Head of caudate nucleus (tissue), 42 donors: ENCODE measurements at regions of chr3 and their contacts with region 1.

Region 1: DNA sequence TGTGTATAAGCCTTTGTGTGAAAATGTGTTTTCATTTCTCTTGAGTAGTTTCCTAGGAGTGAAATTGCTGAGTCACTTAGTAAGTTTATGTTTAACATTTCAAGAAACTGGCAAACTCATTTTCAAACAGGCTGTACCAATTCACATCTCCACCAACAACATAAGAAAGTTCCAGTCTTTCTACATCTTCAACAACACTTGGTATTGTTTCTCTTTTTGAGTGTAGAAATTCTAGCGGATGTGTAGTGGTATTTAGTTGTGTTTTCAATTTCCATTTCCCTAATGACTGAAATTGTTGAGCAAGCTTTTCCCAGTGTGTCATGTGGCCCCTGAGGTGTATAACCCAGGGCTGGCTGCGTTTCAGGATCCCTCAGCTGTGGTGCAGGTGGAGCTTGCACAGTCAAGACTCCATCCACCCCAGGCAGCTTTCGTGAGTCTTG is 258.5 kb downstream of the PDCD6IP start:
- DNase-seq: no peak

Region 2: DNA sequence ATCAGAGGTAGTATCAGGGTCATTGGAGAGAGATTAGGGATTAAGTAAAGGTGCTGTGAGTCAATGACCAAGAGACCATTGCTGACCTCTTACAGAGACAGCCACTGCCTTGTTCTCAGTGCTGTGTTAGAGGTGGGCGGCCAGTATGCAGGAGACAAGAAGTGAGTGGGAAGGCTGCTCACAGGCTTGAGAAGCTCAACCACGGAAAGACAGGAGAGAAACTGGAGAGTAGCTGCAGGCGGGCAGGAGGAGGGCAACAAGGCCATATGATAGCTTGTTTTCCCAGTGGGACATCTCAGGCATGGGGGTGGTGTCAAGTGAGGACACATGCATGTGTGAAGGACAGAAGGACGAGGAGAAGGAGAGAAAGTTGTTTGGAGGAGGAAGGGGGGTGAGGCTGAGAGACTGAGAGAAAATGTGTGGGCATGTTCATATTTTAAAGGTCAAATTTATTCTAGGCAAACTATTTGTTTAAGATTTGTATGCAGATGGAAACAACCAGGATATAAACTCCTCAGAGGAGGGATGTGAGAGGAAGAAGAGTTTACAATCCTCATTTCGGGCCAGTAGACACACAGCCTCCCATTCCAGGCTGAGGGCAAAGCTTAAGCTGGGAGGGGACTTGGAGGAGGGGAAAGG is 21.1 kb before region 1 on chr3:
- intact Hi-C with region 1: loop called (anchors 2 kb)
- DNase-seq: no peak